ENCODE measurements at regions of chr1 and their contacts with region 1.

Region 1: DNA sequence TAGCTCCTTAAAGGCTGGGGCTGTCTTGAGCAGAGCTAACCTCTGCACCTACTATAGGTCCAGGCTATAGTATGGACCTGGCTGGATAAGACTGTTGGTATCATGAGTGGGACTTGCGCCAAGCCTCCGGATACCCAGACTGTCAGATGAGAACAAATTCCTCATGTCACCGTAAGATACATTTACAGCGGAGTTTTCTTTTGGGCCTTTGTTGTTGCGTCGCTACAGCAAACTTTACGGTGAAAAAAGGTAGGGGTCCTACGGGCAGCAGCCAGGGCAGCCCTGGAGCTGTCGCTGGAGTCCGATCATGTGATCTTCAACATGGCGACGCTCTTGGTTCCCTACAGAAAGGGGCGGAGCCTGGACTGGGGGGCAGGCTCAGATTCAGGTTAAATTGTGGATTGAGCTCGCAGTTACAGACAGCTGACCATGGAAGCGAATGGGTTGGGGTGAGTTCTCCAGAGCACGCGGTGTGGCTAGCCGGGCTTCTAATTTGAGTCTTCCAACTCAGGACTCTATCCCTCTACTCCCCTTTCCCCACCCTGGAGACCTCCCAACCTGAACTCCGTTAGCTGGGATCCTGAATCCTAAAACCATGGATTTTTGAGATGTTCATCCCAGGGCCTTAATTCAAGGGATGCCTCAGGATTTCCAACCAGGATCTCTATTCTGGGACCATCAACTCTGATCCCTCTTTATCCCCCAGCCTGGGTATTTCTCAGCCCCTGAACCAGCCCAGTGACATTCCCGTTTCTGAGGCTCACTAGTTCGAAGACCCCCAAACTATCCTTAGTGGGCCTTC is at the start of gene UROD:
- DNase-seq: peak; percentile 95

Region 2: GRCh38 chr1:44730741-44731512 is 281.1 kb before region 1 on chr1 and contains the start of gene RNU5D-1:
- CTCF ChIA-PET with region 1: interaction called, 4 read pairs
- POLR2A ChIA-PET with region 1: interaction called, 16 read pairs
- DNase-seq: peak; percentile 77

Region 3: DNA sequence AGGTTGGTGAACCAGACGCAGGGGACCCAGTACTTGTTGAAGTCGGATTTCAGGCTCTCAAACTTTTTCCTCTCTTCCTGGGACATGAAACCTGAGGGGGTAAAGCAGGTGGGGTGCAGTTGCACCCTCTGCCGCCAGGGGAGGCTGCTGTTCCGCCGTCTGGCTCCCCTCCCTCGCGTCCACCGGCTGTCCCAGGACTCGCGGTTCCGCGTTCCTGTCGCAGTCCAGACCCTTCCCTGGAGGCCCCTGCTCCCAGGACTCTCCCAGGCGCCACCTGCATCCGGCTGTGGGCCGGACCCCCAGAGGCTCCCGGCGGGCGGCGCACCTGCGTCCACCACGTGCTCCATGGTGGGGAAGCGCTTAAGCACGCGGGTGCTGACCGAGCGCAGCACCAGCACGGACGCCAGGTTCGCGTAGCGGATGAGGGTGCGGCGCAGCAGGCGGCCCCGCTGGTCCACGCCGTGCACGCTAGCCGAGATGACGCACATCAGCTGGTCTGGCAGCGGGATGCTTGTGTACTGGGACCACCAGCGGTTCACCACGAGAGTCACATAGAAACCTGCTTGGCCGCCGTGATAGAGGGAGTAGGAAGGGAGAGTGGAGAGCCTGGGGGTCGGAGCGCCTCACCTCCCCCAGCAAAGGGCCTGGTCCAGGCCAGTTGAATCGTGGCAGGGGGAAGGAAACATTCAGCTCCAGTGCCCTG is 225.7 kb before region 1 on chr1:
- CTCF ChIA-PET with region 1: interaction called, 7 read pairs
- POLR2A ChIA-PET with region 1: interaction called, 22 read pairs
- DNase-seq: peak; percentile 79

Region 4: DNA sequence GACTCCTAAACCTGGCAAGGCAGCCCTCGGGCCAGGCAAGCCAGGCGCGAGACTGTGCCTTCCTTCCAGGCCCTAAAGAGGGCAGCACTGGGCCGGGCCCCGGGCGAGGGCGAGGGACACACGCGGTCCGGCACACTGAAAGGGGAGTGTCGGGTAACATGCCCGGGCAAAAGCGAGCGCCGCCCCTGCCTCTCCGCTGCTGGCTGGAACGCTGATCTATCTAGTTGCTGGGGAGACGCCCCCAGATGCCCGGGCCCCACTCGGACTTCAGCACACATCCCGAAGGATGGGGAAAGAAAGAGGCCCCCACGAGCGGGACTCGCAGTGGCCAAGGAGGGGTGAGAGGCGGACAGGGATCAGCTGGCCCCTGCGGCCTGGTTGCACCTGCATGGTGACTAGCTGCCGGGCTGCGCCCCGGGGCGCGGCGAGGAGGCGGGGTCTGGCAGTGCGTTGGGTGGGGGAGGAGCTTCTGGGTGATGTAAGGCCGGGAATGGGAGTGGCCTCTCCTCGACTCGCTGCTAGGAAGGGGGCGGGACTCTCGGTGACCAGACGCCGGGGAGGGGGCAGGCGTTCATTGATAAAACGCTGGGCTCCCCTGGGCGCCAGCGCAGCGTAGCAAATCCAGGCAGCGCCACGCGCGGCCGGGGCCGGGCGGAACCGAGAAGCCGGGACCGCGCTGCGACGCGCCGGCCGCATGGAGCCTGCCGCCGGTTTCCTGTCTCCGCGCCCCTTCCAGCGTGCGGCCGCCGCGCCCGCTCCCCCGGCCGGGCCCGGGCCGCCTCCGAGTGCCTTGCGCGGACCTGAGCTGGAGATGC is 212.1 kb before region 1 on chr1 and contains the start of gene PLK3:
- CTCF ChIA-PET with region 1: interaction called, 3 read pairs
- POLR2A ChIA-PET with region 1: interaction called, 11 read pairs
- DNase-seq: peak; percentile 91

Region 5: DNA sequence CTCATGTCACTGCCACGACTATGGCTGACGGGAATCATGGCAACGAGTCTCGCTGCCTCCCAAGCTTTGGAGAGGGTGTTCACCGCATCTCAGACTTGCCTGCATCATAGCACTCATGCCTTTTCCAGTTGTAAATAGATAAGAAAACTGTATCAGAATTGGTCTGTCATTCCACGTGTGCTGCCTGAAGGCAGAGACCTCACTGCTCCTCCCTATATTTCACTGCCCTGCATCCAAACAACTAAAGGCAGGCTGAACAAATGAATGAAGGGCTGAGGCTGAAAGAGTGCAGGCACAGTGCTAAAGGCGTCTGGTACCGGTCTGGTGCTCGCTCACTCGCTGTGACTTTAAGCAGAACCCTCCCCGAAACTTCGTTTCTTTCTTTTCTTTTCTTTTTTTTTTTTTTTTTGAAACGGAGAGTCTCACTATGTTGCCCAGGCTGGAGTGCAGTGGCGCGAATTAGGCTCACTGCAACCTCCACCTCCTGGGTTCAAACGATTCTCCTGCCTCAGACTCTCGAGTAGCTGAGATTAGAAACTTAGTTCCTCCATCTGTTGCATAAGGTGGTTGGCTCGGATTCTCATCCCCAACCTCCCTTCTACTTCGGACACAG is 26.2 kb before region 1 on chr1:
- CTCF ChIA-PET with region 1: no interaction called
- POLR2A ChIA-PET with region 1: interaction called, 13 read pairs
- DNase-seq: no peak

Region 6: DNA sequence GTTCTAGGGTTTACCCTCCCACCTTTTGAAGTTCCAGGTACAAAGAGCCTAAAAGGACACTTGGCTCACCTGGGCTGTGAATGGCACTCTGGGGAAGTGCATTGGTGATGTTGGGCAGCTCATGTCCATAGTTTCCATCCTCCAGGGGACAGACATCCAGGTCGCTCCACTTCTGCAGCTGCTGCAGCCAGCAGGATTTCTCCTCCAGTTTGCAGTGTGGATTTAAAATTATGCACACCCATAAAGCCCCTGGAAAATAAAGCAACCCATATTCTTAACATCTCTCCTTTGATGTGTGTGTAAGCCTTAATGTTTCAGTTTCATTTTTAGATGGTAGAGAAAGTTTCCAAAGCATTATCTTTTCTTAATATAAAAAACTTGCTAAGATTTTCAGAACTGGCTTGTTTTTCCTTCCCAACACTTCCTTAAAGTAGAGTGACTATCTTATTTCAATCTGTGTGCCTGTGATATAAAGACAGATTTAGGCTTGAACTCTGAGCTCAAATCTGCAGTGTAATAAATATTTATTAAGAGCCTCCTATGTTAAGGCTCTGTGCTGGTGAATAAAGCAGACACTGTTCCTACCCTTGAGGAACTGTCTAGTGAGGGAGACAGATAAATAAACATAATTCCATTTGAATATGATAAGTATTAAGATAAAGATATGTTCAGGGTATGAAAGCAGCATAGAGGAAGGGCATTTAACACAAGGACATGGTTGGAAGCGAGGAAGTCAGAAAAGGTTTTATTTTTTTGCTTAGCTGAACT is 39.2 kb after region 1 on chr1:
- CTCF ChIA-PET with region 1: no interaction called
- POLR2A ChIA-PET with region 1: no interaction called
- DNase-seq: no peak

Region 7: GRCh38 chr1:45339789-45340570 is 327.9 kb after region 1 on chr1 and contains the starts of genes MUTYH and TOE1:
- CTCF ChIA-PET with region 1: no interaction called
- POLR2A ChIA-PET with region 1: interaction called, 35 read pairs
- DNase-seq: peak; percentile 94

Measured in HEK293T (cell line).